ENCODE measurements at regions of chr10 and their contacts with region 1.

Region 1: DNA sequence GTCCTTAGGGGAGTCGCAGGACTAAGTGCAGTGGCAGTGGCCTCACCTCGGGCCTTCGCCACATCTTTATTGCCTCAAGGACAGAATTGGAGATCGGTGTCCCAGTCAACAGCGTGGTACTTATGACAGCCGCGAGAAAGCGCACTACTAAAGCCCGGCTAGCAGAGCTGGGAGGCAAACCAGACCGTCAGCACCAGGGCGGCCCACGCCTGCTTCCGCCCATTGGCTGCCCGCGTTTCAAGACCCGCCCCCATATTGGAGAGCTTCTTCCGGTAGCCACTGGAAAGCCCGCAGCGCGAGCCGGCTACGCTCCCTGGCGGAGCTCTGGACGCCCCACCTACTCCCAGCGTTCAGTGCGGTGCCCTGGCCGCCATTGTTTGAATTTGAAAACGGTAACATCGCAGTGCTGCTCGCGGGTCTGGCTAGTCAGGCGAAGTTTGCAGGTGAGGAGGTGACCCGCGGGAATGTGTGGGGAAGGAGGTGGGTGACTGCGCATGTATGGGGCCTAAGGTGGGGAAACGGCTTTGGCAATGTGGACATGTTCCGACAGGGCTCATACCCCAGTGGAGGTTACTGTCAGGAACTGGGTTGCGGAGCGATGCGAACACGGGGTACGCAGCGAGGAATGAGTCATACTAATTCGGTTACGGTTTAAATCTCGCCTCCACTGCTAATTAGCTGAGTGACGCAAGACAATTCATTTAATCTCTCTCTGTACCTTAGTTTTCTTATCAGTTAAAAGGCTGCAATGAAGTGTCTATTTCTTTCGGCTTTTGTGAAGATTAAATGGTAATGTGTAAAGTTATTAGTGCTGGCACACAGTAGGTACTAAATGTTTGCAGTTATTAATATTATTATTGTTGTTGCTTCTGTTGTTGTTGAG is at the start of gene KIF20B:
- DNase-seq: peak; percentile 91 to 96 (median 94)
- H3K4me3 ChIP-seq: peak within 1 kb of the TSS; percentile 73
- H3K27ac ChIP-seq: peak within 1 kb of the TSS in 1 of 2 donors; percentile 65
- H3K4me1 ChIP-seq: peaks cover 3% of the 10 kb centered on the region
- H3K27me3 ChIP-seq: no peaks in the 10 kb centered on the region
- CTCF ChIP-seq: peak; percentile 30 to 43 (median 42)
- EP300 ChIP-seq: no peak
- POLR2A ChIP-seq: peak; percentile 42
- total RNA-seq, gene KIF20B: 2.6 to 9.3 (median 6.3) TPM

Region 2: DNA sequence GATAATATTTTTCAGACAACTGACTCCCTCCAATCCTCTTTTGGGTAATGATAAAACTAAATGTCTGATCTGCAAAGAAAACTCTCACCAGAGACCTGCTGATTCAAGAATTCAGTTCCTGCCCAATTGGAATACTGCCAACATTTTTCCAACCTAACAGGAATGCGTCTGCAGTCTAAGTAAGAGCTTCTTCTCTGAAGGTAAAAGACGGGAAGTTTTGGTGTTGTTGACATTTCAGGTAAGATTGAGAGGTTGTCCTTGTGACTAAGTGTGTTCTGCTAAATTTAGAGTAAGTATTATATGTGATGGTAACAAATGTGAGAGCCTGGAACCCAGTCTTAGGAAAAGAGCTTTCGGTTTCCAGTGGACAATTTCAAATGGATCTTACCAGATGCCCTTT is 269.5 kb before region 1 on chr10:
- intact Hi-C with region 1: loop called in 2 of 4 experiments (anchors 5 to 10 kb)
- DNase-seq: no peak
- H3K4me3 ChIP-seq: no peak overlapping the region
- H3K27ac ChIP-seq: no peak overlapping the region
- H3K4me1 ChIP-seq: no peaks in the 10 kb centered on the region
- H3K27me3 ChIP-seq: no peaks in the 10 kb centered on the region
- CTCF ChIP-seq: no peak
- EP300 ChIP-seq: no peak
- POLR2A ChIP-seq: no peak

Region 3: GRCh38 chr10:89873055-89873454 is 171.6 kb after region 1 on chr10:
- intact Hi-C with region 1: no loop called
- DNase-seq: no peak
- H3K4me3 ChIP-seq: no peak overlapping the region
- H3K27ac ChIP-seq: no peak overlapping the region
- H3K4me1 ChIP-seq: no peaks in the 10 kb centered on the region
- H3K27me3 ChIP-seq: no peaks in the 10 kb centered on the region
- CTCF ChIP-seq: no peak
- EP300 ChIP-seq: no peak
- POLR2A ChIP-seq: no peak